Endothelial cell of umbilical vein (primary cell): ENCODE measurements at regions of chr16 and their contacts with region 1.

Region 1: DNA sequence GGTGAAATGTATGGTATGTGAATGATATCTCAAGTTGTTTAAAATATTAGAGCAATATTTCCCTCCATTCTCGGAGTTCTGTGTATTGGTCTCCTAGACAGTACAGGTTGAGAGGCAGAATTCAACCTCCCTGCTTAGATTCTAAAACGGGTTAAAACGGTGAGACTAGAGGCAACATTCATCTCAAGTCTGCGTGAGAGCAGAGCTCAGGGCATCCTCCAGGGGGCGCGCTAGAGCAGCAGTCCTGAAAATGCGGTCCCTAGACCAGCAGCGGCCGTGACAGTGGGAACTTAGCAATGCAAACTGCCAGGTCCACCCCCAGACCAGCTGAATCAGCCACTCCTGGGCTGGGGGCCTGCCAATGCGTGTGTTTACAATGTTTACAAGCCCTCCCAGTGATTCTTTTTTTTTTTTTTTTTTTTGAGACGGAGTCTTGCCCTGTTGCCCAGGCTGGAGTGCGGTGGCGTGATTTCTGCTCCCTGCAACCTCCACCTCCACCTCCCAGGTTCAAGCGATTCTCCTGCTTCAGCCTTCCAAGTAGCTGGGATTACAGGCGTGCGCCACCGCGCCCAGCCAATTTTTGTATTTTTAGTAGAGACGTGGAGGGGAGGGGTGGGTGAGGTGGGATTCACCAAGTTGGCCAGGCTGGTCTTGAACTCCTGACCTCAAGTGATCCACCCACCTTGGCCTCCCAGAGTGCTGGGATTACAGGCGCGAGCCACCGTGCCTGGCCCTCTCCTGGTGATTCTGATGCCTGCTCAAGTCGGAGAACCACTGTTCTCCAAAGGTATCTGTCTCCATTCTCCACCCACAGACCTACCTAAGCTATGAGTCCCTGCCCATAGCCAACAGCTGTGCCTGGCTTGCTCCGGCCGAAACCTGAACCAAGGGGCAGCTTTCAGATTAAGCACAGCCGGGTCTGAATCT is 24.2 kb downstream of the KLHL36 start:
- DNase-seq: peak; percentile 72
- H3K4me3 ChIP-seq: no peak overlapping the region
- H3K27ac ChIP-seq: no peak overlapping the region
- H3K4me1 ChIP-seq: no peaks in the 10 kb centered on the region
- H3K27me3 ChIP-seq: peaks cover 2 to 3% of the 10 kb centered on the region in 2 experiments
- CTCF ChIP-seq: peak; percentile 93 to 97
- POLR2A ChIP-seq: no peak

Region 2: DNA sequence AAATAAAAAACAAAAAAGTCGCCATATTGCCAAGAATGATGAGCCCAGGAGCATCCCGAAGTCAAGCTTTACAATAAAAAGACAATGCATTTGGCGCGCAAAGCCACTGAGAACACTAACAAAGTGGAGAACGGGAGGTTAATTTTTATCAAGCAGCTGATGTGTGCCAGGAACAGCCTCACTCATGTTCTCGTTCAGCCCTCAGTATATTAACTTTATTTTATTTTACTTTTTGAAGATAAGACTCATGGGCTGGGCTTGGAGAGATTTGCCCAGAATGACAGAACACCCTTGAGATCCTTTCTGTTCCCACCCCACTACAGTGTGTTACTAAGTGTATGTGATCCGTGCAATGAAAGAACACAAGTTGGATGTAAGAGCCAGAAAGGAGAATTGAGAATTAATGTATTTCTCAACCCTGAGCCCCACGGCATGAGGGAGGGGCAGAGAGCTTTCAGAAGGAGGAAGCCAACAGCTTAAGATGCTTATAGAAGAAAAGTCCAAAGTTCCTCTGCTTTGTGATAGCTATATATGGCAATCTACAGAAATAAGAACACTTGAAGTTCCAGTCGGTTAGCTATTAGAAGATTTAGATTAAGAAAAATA is 103.1 kb before region 1 on chr16:
- CTCF ChIA-PET with region 1: no interaction called
- POLR2A ChIA-PET with region 1: no interaction called
- dilution Hi-C with region 1: no loop called
- intact Hi-C with region 1: no loop called
- DNase-seq: no peak
- H3K4me3 ChIP-seq: no peak overlapping the region
- H3K27ac ChIP-seq: no peak overlapping the region
- H3K4me1 ChIP-seq: no peaks in the 10 kb centered on the region
- H3K27me3 ChIP-seq: no peaks in the 10 kb centered on the region
- CTCF ChIP-seq: no peak
- POLR2A ChIP-seq: no peak

Region 3: DNA sequence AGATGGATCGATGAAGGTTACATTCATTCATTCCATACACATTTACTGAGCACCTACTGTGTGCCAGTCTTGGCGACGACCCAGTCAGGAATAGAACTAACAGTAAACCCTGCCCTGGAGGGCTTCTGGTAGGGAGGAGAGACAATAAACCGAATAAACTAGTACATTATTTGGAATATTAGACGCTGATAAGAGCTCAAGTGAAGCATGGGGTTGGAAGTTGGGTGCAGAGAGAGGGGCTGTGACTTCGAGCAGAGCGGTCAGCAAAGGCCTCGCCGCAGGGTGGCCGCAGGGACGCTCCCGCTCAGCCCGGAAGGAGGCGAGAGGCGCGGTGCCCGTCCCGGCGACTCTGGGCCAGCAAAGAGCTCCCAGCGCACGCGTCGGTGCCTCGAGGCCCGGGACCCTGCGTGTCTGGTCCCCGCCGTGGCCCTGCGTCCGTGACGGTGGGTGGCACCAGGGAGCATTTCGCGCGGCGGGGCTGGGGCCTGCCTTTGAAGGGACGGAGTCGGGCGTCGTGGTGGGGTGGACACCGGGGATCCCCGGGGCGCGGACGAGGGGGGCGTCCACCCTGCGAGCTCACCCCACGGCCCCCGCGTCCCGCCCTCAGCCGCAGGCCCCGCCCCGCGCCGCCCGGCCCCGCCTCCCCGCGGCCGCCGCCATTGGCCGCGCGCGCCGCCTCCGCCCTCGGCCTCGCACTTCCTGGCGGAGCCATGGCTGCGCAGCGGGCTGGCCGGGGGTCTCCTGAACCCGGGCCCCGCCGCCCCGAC is 24.5 kb before region 1 on chr16 and contains the start of gene KLHL36:
- CTCF ChIA-PET with region 1: interaction called, 11 read pairs
- POLR2A ChIA-PET with region 1: no interaction called
- dilution Hi-C with region 1: no loop called
- intact Hi-C with region 1: no loop called
- DNase-seq: peak; percentile 33
- H3K4me3 ChIP-seq: peak within 1 kb of the TSS; percentile 32 to 65 (median 40)
- H3K27ac ChIP-seq: no peak within 1 kb of the TSS
- H3K4me1 ChIP-seq: peaks cover 9% of the 10 kb centered on the region
- H3K27me3 ChIP-seq: peaks cover 3% of the 10 kb centered on the region in 2 experiments
- CTCF ChIP-seq: no peak
- POLR2A ChIP-seq: peak; percentile 43
- total RNA-seq, gene KLHL36: 33.3 and 38.8 TPM in 2 replicates

Region 4: DNA sequence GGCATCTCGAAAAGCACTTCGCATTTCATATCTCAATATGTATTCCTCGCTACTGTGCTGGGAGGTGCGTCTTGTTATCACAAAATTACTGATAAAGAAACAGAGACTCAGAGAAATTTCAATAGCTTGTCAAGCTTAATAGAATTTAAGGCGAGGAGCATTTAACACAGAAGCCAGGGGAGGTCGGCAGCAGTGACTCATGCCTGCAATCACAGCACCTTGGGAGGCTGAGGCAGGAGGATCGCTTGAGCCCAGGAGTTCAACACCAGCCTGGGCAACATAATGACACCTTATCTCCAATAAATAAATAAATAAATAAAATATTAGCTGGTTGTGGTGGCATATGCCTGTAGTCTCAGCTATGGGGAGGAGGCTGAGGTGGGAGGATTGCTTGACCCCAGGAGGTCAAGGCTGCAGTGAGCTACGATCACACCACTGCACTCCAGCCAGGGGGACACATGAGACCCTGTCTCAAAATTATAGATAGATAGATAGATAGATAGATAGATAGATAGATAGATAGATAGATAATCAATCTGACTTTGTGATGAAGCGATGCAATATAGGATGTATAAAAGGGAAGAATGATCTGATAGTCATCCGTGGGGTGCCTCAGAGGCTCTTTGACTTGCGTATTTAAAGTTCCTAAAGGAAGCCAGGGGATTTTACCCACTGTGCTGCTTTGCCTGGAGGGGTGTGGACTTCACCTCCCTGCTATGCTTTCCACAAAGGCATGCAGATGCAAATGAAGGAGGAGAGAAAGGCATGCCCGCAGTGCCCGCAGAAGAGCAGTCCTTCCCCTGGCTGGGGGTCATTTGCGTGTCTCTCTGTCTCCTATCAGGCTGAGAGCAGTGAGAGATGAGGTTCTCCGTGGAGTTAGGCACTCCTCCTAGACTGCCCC is 11.4 kb after region 1 on chr16:
- CTCF ChIA-PET with region 1: interaction called, 13 read pairs
- POLR2A ChIA-PET with region 1: no interaction called
- dilution Hi-C with region 1: no loop called
- intact Hi-C with region 1: no loop called
- DNase-seq: no peak
- H3K4me3 ChIP-seq: no peak overlapping the region
- H3K27ac ChIP-seq: no peak overlapping the region
- H3K4me1 ChIP-seq: peaks cover 6% of the 10 kb centered on the region
- H3K27me3 ChIP-seq: peaks cover 11 to 14% of the 10 kb centered on the region in 2 experiments
- CTCF ChIP-seq: no peak
- POLR2A ChIP-seq: no peak

Region 5: DNA sequence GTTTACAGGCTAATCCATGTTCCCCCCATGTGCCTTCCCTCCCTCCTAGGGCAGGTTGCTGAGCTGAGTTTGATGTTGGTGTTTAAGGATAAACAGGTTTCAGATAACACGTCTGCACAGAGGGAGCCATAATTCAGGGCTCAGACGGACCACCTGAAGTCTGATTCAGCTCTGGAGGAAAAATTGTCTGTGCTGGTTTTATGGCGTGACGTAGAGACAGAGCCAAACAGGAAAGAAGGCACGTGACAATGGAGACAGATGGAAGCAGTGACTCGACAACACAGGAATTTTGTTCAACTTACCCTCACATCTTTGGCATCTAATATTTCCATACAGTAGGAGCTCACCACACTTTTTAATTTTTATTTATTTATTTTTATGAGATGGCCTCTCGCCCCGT is 16.6 kb after region 1 on chr16:
- CTCF ChIA-PET with region 1: interaction called, 13 read pairs
- POLR2A ChIA-PET with region 1: interaction called, 3 read pairs
- dilution Hi-C with region 1: no loop called
- intact Hi-C with region 1: no loop called
- DNase-seq: peak; percentile 83
- H3K4me3 ChIP-seq: no peak overlapping the region
- H3K27ac ChIP-seq: peak overlapping the region; percentile 69
- H3K4me1 ChIP-seq: peaks cover 14% of the 10 kb centered on the region
- H3K27me3 ChIP-seq: no peaks in the 10 kb centered on the region
- CTCF ChIP-seq: no peak
- POLR2A ChIP-seq: no peak

Region 6: GRCh38 chr16:84699712-84700445 is 27.3 kb after region 1 on chr16 and contains the start of gene USP10:
- CTCF ChIA-PET with region 1: interaction called, 38 read pairs
- POLR2A ChIA-PET with region 1: no interaction called
- dilution Hi-C with region 1: no loop called
- intact Hi-C with region 1: no loop called
- DNase-seq: peak; percentile 77
- H3K4me3 ChIP-seq: peak within 1 kb of the TSS; percentile 77 to 97 (median 93)
- H3K27ac ChIP-seq: peak within 1 kb of the TSS; percentile 69
- H3K4me1 ChIP-seq: peaks cover 14% of the 10 kb centered on the region
- H3K27me3 ChIP-seq: no peaks in the 10 kb centered on the region
- CTCF ChIP-seq: no peak
- POLR2A ChIP-seq: no peak
- total RNA-seq, gene USP10: 97.4 and 115 TPM in 2 replicates

Region 7: DNA sequence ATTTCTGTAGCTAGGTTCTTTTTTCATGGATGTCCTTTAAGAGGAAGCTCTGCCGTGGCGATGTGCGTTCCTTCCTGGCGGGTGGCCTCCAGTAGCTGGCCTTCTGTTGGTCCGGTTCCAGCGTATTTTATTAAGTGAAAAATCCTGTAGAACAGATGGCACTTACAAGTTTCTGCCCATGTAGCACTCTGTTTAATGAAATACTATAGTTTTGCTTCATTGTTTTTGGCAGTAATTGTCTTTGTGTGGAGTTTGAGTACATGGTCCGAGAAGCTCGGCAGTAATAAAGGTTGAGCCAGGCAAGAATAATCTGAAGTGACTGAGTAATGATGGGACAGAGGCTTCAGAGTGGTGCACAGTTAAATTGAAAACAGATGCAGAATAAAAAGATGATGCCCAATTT is 47.6 kb after region 1 on chr16:
- CTCF ChIA-PET with region 1: interaction called, 135 read pairs
- POLR2A ChIA-PET with region 1: no interaction called
- dilution Hi-C with region 1: no loop called
- intact Hi-C with region 1: no loop called
- DNase-seq: peak; percentile 52
- H3K4me3 ChIP-seq: no peak overlapping the region
- H3K27ac ChIP-seq: no peak overlapping the region
- H3K4me1 ChIP-seq: peaks cover 29% of the 10 kb centered on the region
- H3K27me3 ChIP-seq: no peaks in the 10 kb centered on the region
- CTCF ChIP-seq: no peak
- POLR2A ChIP-seq: no peak

Region 8: GRCh38 chr16:84738255-84739038 is 65.9 kb after region 1 on chr16:
- CTCF ChIA-PET with region 1: interaction called, 60 read pairs
- POLR2A ChIA-PET with region 1: no interaction called
- dilution Hi-C with region 1: no loop called
- intact Hi-C with region 1: loop called (anchors 1 kb)
- DNase-seq: peak; percentile 92
- H3K4me3 ChIP-seq: no peak overlapping the region
- H3K27ac ChIP-seq: no peak overlapping the region
- H3K4me1 ChIP-seq: peaks cover 28% of the 10 kb centered on the region
- H3K27me3 ChIP-seq: no peaks in the 10 kb centered on the region
- CTCF ChIP-seq: peak; percentile 88 to 92
- POLR2A ChIP-seq: no peak

Region 9: GRCh38 chr16:84947022-84947421 is 274.5 kb after region 1 on chr16:
- CTCF ChIA-PET with region 1: no interaction called
- POLR2A ChIA-PET with region 1: no interaction called
- dilution Hi-C with region 1: no loop called
- intact Hi-C with region 1: no loop called
- DNase-seq: peak; percentile 18
- H3K4me3 ChIP-seq: no peak overlapping the region
- H3K27ac ChIP-seq: no peak overlapping the region
- H3K4me1 ChIP-seq: no peaks in the 10 kb centered on the region
- H3K27me3 ChIP-seq: peaks cover 0 to 2% of the 10 kb centered on the region in 2 experiments
- CTCF ChIP-seq: no peak
- POLR2A ChIP-seq: no peak